Activated B cell treated with CpG ODN at 0.5 μM for 24 hours (primary cell): ENCODE measurements at regions of chr6 and their contacts with region 1.

Region 1: GRCh38 chr6:29942275-29943052 is at the start of gene HLA-A:
- DNase-seq: peak; percentile 79
- ATAC-seq: peak; percentile 90
- H3K4me3 Mint-ChIP-seq: peak within 1 kb of the TSS; percentile 92
- H3K27ac Mint-ChIP-seq: peak within 1 kb of the TSS; percentile 100
- H3K4me1 Mint-ChIP-seq: peaks cover 69% of the 10 kb centered on the region
- H3K27me3 Mint-ChIP-seq: no peaks in the 10 kb centered on the region
- CTCF ChIP-seq: no peak
- total RNA-seq, gene HLA-A: 1,592 and 1,608 TPM in 2 replicates

Region 2: DNA sequence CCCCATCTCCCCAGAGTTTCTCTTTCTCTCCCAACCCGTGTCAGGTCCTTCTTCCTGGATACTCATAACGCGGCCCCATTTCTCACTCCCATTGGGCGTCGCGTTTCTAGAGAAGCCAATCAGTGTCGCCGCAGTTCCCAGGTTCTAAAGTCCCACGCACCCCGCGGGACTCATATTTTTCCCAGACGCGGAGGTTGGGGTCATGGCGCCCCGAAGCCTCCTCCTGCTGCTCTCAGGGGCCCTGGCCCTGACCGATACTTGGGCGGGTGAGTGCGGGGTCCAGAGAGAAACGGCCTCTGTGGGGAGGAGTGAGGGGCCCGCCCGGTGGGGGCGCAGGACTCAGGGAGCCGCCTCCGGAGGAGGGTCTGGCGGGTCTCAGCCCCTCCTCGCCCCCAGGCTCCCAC is 219.2 kb before region 1 on chr6 and contains the start of gene HLA-F:
- CTCF ChIA-PET with region 1: no interaction called
- POLR2A ChIA-PET with region 1: no interaction called
- intact Hi-C with region 1: loop called (anchors 5 kb)
- DNase-seq: peak; percentile 76
- ATAC-seq: peak; percentile 89
- H3K4me3 Mint-ChIP-seq: peak within 1 kb of the TSS; percentile 94
- H3K27ac Mint-ChIP-seq: peak within 1 kb of the TSS; percentile 98
- H3K4me1 Mint-ChIP-seq: peaks cover 61% of the 10 kb centered on the region
- H3K27me3 Mint-ChIP-seq: no peaks in the 10 kb centered on the region
- CTCF ChIP-seq: no peak
- total RNA-seq, gene HLA-F: 726 and 736 TPM in 2 replicates

Region 3: GRCh38 chr6:29887819-29888776 is 54.4 kb before region 1 on chr6:
- CTCF ChIA-PET with region 1: no interaction called
- POLR2A ChIA-PET with region 1: interaction called, 7 read pairs
- intact Hi-C with region 1: loop called (anchors 1 kb)
- DNase-seq: peak; percentile 74
- ATAC-seq: peak; percentile 86
- H3K4me3 Mint-ChIP-seq: peak overlapping the region; percentile 84
- H3K27ac Mint-ChIP-seq: peak overlapping the region; percentile 89
- H3K4me1 Mint-ChIP-seq: peaks cover 18% of the 10 kb centered on the region
- H3K27me3 Mint-ChIP-seq: no peaks in the 10 kb centered on the region
- CTCF ChIP-seq: no peak

Region 4: GRCh38 chr6:29964887-29965562 is 22.6 kb after region 1 on chr6:
- CTCF ChIA-PET with region 1: interaction called, 3 read pairs
- POLR2A ChIA-PET with region 1: interaction called, 64 read pairs
- intact Hi-C with region 1: loop called (anchors 1 kb)
- DNase-seq: peak; percentile 53
- ATAC-seq: peak; percentile 97
- H3K4me3 Mint-ChIP-seq: peak overlapping the region; percentile 82
- H3K27ac Mint-ChIP-seq: peak overlapping the region; percentile 92
- H3K4me1 Mint-ChIP-seq: peaks cover 53% of the 10 kb centered on the region
- H3K27me3 Mint-ChIP-seq: no peaks in the 10 kb centered on the region
- CTCF ChIP-seq: no peak

Region 5: DNA sequence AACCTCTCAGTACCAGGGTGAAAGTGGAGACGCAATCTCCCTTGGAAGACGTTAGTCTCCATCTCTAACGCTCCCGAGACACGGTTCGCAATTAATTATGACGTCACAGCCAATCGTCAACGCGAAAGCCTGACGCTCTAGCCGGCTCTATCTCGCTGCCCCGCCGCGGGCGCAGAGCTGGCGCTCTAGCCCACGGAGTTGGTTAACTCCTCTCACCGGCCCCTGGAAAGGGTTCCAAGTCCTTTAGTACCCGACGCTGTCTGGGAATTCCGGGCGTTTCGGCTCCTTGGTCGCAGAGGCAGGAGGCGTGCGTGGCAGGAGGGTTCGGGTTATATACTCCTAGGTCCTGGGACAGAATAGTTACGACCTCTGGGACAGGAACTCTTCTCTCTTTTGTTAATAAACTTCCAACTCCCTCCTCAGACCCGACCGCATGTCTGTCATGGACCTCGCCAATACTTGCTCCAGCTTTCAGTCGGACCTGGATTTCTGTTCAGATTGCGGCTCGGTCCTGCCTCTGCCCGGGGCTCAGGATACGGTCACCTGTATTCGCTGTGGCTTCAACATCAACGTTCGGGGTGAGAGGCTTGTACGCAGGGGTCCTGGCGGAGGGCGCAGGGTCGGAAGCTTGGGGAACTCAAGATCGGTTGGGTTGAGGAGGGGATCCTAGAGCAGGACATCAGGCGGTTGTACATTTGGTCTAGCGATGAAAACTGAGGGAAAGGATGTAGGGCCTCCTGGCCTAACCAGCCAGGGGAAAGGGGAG is 118.8 kb after region 1 on chr6 and contains the start of gene POLR1H:
- CTCF ChIA-PET with region 1: no interaction called
- POLR2A ChIA-PET with region 1: interaction called, 16 read pairs
- intact Hi-C with region 1: loop called (anchors 2 kb)
- DNase-seq: peak; percentile 73
- ATAC-seq: peak; percentile 91
- H3K4me3 Mint-ChIP-seq: peak within 1 kb of the TSS; percentile 98
- H3K27ac Mint-ChIP-seq: peak within 1 kb of the TSS; percentile 97
- H3K4me1 Mint-ChIP-seq: peaks cover 44% of the 10 kb centered on the region
- H3K27me3 Mint-ChIP-seq: no peaks in the 10 kb centered on the region
- CTCF ChIP-seq: no peak
- total RNA-seq, gene POLR1H: 44.1 and 50.5 TPM in 2 replicates